Posterior vena cava (tissue), 2 donors: ENCODE measurements at regions of chr5 and their contacts with region 1.

Region 1: DNA sequence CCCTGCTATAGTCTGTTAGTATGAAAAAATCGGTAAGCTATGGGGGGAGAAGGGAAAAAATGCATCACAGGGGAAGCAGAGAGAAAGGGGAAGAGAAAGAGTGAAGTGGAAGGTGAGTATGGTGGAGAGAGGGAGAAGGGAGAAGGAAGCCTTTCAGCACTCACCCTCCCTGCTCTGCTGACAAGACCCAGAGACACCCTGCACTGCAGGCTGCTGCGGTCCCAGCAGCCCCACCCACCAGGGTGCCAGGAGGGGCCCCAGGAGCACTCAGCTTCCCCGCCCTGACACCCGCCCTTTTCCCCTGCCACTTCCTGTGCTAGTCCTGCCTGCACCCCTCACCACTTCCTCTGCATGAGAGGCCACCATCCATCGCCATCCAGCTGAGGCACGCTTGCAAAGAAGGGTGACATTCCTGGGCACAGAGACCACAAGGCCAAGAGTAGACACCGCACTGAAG is 12.7 kb downstream of the STK10 start:
- DNase-seq: peak; percentile 89

Region 2: GRCh38 chr5:171785517-171785916 is 389.8 kb before region 1 on chr5 and contains the start of gene SMIM23:
- intact Hi-C with region 1: no loop called
- DNase-seq: no peak
- total RNA-seq, gene SMIM23: not detected

Region 3: GRCh38 chr5:172156541-172156994 is 18.7 kb before region 1 on chr5:
- intact Hi-C with region 1: loop called in 1 of 2 experiments (anchors 1 kb)
- DNase-seq: peak; percentile 80